PC-9 (cell line): ENCODE measurements at regions of chr11 and their contacts with region 1.

Region 1: GRCh38 chr11:126978911-126979310 is 21.7 kb downstream of the KIRREL3 start:
- DNase-seq: no peak
- H3K4me3 ChIP-seq: no peak overlapping the region
- H3K27ac ChIP-seq: no peak overlapping the region
- H3K4me1 ChIP-seq: no peaks in the 10 kb centered on the region
- H3K27me3 ChIP-seq: peaks cover 24% of the 10 kb centered on the region
- CTCF ChIP-seq: no peak

Region 2: DNA sequence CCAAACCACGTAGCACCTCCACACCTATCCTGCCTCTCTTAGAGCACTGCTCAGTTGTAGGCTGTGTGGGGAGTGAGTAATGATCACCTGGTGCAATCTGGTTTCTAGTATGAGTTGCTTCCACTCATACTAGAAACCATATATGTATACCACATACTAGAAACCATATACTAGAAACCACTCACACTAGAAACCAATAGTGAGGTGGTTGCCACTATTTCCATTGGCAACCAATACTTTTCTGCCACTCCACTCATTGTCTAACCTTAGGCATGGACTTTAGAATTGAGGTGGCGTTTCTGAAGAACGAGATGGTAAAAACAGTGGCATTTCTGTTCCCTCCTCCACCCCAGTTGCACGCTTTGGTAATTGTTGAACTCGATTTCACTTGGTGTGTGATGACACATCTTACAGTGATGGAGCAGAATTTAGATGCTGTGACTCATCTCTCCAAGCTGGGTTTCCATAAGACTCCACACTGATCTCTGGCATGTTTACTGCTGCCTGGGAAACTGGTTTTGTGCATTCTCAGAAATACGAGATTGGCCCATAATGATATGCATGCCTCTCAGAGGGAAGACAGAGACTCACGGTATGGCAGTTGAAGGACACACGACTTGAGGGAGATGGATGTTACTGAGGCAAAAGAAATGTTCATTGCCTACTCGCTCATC is 61.2 kb before region 1 on chr11:
- CTCF ChIA-PET with region 1: no interaction called
- POLR2A ChIA-PET with region 1: no interaction called
- intact Hi-C with region 1: loop called (anchors 5 kb)
- DNase-seq: peak; percentile 53 to 58
- H3K4me3 ChIP-seq: no peak overlapping the region
- H3K27ac ChIP-seq: no peak overlapping the region
- H3K4me1 ChIP-seq: no peaks in the 10 kb centered on the region
- H3K27me3 ChIP-seq: no peaks in the 10 kb centered on the region
- CTCF ChIP-seq: no peak